ENCODE measurements at regions of chr7 and their contacts with region 1.

Region 1: DNA sequence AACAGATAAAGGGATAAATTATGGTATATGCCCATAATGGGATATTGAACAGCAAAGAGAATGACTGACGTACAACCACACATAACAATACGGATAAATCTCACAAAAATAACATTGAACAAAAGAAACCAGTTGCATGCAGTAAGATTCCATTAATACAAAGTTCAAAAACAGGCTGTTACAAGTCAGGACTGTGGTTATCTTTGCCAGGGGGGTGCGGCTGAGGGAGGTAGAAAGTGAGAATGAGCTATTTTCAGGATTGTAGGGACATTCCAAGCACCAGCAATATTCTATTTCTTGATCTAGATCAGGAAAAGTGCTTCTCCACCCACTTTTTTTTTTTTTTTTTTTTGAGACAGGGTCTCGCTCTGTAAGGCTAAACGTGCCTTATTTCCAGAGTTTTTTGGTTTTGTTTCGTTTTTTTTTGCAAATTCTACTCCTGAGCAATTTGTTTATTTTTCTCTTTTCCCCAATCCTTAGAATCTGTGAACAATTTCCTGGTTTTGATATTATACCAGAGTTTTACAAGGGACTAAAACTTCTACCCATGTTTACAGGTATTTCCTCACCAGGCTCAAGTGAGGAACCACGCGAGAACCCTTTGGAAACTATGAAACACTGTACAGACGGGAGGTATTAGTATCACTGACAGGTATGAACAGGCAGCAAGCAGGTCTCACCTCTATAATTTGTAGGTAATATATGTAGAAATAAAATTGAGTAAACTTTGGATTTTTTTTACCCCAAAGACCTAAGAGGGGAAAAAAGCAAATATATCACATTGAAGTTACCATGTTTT is 9.9 kb downstream of the SMURF1 start:
- DNase-seq: no peak
- CTCF ChIP-seq: no peak

Region 2: DNA sequence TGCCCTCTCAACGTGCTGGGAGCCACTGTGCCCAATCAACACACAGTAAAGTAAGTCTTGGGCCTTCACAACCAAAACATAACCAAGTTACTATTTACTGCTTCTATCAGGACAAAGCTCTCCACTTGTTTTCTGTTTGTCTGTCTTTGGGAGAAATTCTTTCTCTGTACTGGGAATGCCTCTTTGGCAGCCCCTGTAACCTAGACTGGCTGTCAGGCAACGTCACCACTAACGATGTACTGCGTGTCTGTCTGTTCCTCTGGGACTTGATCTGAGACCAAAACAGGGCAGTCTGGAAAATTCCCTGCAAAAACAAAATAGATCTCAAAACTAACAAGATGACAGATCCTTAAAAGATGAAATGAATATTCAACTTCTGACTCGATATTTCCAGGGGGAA is 103.0 kb before region 1 on chr7:
- CTCF ChIA-PET with region 1: no interaction called
- POLR2A ChIA-PET with region 1: interaction called, 13 read pairs
- DNase-seq: no peak
- CTCF ChIP-seq: no peak

Measured in GM10248 (cell line).